PC-9 (cell line): ENCODE measurements at regions of chr2 and their contacts with region 1.

Region 1: DNA sequence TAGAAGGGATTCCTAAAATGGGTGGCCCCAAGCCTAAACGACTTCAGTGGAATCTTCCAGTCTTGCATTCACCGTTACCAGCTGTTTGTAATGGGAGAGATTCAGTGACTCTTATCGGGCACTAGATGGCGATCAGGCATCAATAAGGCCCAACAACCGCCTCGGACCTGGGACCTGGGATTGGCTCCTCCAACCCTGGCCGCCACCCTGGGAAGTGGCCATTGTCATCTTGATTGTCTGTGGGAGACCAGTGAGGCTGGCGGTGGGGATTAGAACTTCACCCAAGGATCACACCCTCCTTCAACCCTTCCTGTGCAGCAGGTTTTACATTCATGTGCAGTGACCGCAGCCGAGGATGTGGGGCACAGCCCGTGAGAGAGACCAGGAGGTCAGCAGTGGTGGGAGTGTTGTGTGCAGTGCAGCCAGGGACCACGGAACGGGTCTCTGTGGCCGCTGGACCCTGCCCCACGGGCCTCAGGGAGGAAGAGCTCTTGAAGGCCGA is 85.3 kb downstream of the SPP2 start:
- DNase-seq: peak; percentile 91 to 93
- H3K4me3 ChIP-seq: no peak overlapping the region
- H3K27ac ChIP-seq: peak overlapping the region; percentile 66
- H3K4me1 ChIP-seq: peaks cover 30% of the 10 kb centered on the region
- H3K27me3 ChIP-seq: no peaks in the 10 kb centered on the region
- CTCF ChIP-seq: peak; percentile 90

Region 2: DNA sequence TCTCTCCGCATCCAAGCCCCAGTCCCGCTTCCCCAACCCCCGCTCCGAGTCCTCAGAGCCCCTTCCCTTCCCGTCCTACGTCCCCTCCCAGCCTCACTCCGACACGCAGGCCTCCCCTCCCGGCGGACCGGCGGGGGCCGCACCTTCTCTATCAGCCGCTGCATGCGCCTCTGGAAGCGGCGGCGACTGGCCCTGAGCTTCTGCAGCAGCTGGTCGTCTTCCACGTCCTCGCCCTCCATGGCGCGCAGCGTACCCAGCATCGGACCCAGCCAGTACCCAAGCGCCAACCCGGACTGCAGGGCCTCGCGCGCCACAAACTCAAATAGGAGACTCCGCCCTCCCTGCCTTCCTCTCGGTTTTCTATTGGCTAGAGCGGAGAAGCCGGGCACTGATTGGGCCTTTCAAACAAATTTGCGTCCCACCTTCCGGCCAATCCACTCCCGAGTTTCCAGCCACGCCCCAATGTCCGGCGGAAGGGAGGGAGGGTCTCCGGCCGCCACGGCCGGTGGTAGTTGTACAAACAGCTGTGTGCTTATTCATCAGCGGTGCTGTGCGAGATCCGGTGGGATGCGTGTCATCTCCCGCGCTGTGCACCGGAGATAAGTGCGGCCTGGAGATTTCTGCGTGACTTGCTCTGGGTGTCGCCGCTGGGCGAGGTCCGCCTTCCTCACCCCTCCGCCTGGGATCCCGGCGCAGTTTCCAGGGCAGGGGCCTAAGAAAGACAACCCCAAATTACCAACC is 281.4 kb before region 1 on chr2 and contains the start of gene HJURP:
- CTCF ChIA-PET with region 1: interaction called, 5 read pairs
- POLR2A ChIA-PET with region 1: no interaction called
- intact Hi-C with region 1: loop called (anchors 10 kb)
- DNase-seq: peak; percentile 95 to 98
- H3K4me3 ChIP-seq: peak within 1 kb of the TSS; percentile 100
- H3K27ac ChIP-seq: peak within 1 kb of the TSS; percentile 21; the same call in 1 of the 2 replicates
- H3K4me1 ChIP-seq: peaks cover 32% of the 10 kb centered on the region
- H3K27me3 ChIP-seq: no peaks in the 10 kb centered on the region
- CTCF ChIP-seq: no peak
- total RNA-seq, gene HJURP: 109 TPM in 2 replicates

Region 3: GRCh38 chr2:234203135-234203984 is 67.6 kb after region 1 on chr2:
- CTCF ChIA-PET with region 1: no interaction called
- POLR2A ChIA-PET with region 1: interaction called, 3 read pairs
- intact Hi-C with region 1: loop called (anchors 2 kb)
- DNase-seq: peak; percentile 63 to 98
- H3K4me3 ChIP-seq: peak overlapping the region; percentile 1; the same call in 1 of the 2 replicates
- H3K27ac ChIP-seq: peak overlapping the region; percentile 91
- H3K4me1 ChIP-seq: peaks cover 44% of the 10 kb centered on the region
- H3K27me3 ChIP-seq: no peaks in the 10 kb centered on the region
- CTCF ChIP-seq: no peak

Region 4: DNA sequence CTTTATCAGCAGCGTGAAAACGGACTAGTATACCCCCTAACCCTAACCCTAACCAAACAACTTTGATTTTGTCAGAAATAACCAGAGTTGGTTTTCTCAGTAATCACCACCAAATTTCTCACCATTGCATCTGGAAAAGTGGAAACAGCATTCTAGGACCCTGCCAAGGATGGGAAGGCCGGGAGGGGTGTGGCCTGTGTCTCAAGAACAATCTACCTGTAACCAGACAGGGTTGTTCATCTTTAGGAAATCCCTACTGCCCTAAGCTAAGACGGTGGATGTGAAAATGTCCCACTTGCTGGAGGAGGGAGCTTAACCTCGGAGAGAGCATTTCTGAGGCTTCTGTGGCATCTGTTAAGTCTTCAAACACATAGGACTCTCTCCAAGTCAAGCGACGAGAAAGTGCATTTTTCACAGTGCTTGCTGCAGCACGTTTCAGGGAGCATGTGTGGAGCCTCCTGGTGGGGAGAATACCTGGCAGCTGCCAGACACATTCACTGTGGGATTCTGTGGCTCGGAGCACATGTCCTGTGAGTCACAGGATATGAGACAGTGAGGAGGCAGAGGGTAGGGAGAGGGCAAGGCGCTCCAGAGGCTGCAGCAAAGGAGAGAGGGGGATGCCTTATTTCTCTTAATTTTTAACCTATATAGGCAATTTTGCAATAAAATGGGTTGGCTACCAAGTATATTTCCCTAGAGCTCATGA is 122.2 kb after region 1 on chr2:
- CTCF ChIA-PET with region 1: interaction called, 5 read pairs
- POLR2A ChIA-PET with region 1: no interaction called
- intact Hi-C with region 1: loop called (anchors 1 kb)
- DNase-seq: peak; percentile 92 to 98
- H3K4me3 ChIP-seq: peak overlapping the region; percentile 19; the same call in 1 of the 2 replicates
- H3K27ac ChIP-seq: peak overlapping the region; percentile 88
- H3K4me1 ChIP-seq: peaks cover 61% of the 10 kb centered on the region
- H3K27me3 ChIP-seq: no peaks in the 10 kb centered on the region
- CTCF ChIP-seq: peak; percentile 85

Region 5: DNA sequence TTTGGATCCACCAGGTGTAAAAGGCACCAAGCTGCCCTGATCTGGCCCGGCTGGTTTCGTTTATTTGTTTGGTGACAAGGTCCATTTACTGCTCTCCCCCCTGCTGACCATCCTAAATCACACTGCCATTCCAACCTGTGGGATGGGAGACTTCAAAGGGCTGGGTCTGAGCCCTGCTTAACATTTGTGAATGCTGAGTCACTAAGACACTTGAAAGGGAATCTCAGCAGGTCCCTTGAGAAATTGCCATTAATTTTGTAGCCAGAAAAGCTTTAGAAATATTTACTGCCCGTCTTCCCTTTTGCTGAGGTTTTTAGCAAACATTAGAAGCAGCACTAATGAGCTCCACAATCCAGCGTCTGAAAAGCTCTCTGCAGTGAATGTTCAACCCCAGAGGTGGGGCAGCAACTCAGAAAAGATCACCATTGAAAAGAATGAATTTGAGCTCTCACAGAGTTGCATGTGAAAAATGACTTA is 227.3 kb after region 1 on chr2:
- CTCF ChIA-PET with region 1: no interaction called
- POLR2A ChIA-PET with region 1: no interaction called
- intact Hi-C with region 1: loop called (anchors 1 kb)
- DNase-seq: peak; percentile 73 to 99
- H3K4me3 ChIP-seq: peak overlapping the region; percentile 32; the same call in 1 of the 2 replicates
- H3K27ac ChIP-seq: peak overlapping the region; percentile 86
- H3K4me1 ChIP-seq: peaks cover 78% of the 10 kb centered on the region
- H3K27me3 ChIP-seq: no peaks in the 10 kb centered on the region
- CTCF ChIP-seq: no peak

Region 6: DNA sequence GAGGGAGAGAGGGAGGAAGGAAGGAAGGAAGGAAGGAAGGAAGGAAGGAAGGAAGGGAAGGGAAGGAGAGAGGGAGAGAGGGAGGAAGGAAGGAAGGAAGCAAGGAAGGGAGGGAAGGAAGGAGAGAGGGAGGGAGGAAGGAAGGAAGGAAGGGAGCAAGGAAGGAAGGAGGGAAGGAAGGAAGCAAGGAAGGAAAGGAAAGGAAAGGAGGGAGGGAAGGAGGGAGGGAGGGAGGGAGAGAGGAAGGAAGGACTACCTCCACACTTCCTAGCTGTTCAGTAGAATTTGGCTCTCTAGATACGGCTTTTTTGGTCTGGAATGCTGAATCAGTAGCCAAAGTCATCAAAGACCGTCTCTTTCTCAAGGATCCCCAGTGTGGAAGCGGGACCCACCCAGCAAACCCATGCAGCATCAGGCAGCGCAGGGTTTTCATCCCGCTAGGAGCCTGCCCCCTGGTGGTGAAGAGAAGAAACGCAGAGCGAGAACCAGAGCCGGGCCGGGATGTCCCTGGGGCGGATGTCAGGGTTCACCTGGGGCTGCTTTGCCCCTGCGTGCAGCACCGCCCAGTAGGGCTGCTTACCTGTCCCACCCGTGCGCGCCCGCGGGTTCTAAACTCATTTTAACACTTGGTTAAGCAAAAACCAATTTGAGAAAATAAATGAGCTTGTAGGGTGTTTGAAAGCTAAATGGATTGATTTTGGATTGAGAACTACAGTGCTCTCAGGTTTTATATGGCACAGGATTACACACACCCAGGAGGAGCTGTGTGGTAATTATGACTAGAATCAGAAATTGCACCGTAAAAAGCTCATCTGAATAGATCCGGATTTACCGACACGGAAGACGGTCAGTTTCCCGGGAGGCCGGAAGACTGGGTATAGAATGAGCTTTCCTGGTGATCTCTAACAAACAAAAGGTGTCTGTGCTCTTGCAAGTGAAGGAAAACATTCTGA is 409.2 kb after region 1 on chr2:
- CTCF ChIA-PET with region 1: interaction called, 7 read pairs
- POLR2A ChIA-PET with region 1: no interaction called
- intact Hi-C with region 1: loop called (anchors 1 kb)
- DNase-seq: peak; percentile 66 to 83
- H3K4me3 ChIP-seq: no peak overlapping the region
- H3K27ac ChIP-seq: no peak overlapping the region
- H3K4me1 ChIP-seq: peaks cover 4% of the 10 kb centered on the region; the same call in 1 of the 2 replicates
- H3K27me3 ChIP-seq: no peaks in the 10 kb centered on the region
- CTCF ChIP-seq: peak; percentile 98